Activated CD4-positive, alpha-beta memory T cell treated with anti-CD3 and anti-CD28 coated beads, Interleukin-2, amount 10 ng/mL, durations not matched to agents 7 days and 5 days (primary cell): ENCODE measurements at regions of chr14 and their contacts with region 1.

Region 1: GRCh38 chr14:101707068-101707842 is 54.3 kb upstream of the PPP2R5C start:
- DNase-seq: peak; percentile 68
- H3K4me3 Mint-ChIP-seq: no peak overlapping the region
- H3K27ac Mint-ChIP-seq: peak overlapping the region; percentile 73
- H3K4me1 Mint-ChIP-seq: peaks cover 45% of the 10 kb centered on the region
- H3K27me3 Mint-ChIP-seq: peaks cover 15% of the 10 kb centered on the region

Region 2: GRCh38 chr14:101616202-101616601 is 91.1 kb before region 1 on chr14:
- CTCF ChIA-PET with region 1: no interaction called
- POLR2A ChIA-PET with region 1: no interaction called
- DNase-seq: no peak
- H3K4me3 Mint-ChIP-seq: no peak overlapping the region
- H3K27ac Mint-ChIP-seq: no peak overlapping the region
- H3K4me1 Mint-ChIP-seq: no peaks in the 10 kb centered on the region
- H3K27me3 Mint-ChIP-seq: peaks cover 44% of the 10 kb centered on the region

Region 3: DNA sequence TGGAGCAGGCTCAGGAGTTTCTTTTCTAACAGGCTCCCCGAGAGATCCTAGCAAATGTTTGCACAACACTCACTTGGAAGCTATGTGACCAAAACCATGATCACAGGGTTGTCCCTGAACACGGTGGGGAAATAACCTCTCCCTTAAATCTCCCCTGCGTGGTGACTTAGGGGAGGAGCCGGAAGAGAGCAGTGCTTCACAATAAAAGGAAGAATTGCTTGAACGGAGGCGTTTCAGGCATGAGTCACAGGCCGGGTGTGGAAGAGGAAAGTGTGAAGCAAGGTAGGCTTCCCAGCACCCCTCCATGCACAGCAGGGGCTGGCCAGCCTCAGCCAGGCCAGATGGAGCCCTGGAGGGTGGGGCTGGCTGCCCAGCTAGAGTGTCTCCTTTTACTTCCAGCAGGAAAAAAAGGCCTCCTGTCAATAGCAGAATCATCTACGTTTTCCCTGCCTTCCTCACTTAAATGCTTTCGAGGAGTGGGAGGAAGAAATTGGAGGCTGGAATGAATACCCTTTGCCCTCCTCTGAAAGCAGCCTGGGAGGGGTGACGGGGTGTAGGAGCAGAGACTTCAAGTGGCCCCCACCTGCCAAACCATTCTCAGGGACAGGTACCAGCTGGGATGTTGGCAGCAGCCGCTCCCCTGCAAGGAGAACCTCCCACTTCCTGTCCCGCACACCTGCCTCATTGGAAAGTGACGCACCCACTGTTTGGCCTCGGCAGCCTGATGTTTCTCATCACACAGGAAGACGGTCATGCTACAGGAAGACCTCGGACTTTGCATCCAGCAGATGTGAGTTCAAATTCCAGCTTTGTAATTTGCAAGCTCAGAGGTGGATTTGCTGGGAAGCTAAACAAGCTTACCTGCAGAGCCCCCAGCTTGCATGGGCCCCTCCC is 24.2 kb after region 1 on chr14:
- CTCF ChIA-PET with region 1: interaction called, 13 read pairs
- POLR2A ChIA-PET with region 1: interaction called, 13 read pairs
- DNase-seq: peak; percentile 85
- H3K4me3 Mint-ChIP-seq: peak overlapping the region; percentile 70
- H3K27ac Mint-ChIP-seq: peak overlapping the region; percentile 96
- H3K4me1 Mint-ChIP-seq: peaks cover 48% of the 10 kb centered on the region
- H3K27me3 Mint-ChIP-seq: no peaks in the 10 kb centered on the region

Region 4: DNA sequence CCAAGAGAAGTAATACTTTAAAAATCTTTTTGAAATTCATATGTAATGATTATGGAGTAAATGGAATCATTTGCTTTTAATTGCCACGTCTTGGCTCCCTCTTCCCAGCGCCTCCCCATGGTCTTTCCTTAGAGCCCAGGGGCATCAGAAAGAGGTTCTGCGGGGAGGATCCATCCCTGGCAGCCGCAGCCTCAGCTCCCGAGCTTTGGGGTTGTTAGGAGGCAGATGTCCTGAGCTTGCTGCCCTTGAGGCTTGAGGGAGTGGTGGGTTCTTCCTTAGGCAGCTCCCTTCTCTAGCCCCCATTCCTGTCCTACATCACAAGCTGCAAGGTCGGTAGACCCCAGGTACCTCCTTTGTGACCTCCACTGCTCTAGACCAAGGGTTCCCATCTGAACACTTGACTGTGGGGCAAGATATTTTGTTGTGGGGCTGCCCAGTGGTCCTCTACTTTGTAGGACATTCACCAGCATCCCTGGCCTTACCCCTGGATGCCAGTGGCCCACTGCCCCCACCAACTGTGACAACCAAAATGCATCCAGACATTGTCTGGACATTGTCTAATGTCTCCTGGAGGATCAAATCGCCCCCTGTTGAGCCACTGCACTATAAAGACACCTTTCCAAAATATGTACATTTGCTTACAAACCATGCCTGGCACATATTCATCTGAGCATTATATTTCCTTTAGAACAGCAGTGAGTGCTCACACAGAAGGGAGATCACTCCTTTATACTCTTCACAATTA is 60.5 kb after region 1 on chr14:
- CTCF ChIA-PET with region 1: interaction called, 65 read pairs
- POLR2A ChIA-PET with region 1: interaction called, 22 read pairs
- DNase-seq: no peak
- H3K4me3 Mint-ChIP-seq: no peak overlapping the region
- H3K27ac Mint-ChIP-seq: no peak overlapping the region
- H3K4me1 Mint-ChIP-seq: peaks cover 22% of the 10 kb centered on the region
- H3K27me3 Mint-ChIP-seq: no peaks in the 10 kb centered on the region

Region 5: GRCh38 chr14:101947906-101948665 is 240.8 kb after region 1 on chr14:
- CTCF ChIA-PET with region 1: interaction called, 12 read pairs
- POLR2A ChIA-PET with region 1: interaction called, 23 read pairs
- DNase-seq: peak; percentile 100
- H3K4me3 Mint-ChIP-seq: peak overlapping the region; percentile 89
- H3K27ac Mint-ChIP-seq: peak overlapping the region; percentile 85
- H3K4me1 Mint-ChIP-seq: peaks cover 26% of the 10 kb centered on the region
- H3K27me3 Mint-ChIP-seq: peaks cover 18% of the 10 kb centered on the region

Region 6: GRCh38 chr14:102096214-102097114 is 389.2 kb after region 1 on chr14:
- CTCF ChIA-PET with region 1: interaction called, 24 read pairs
- POLR2A ChIA-PET with region 1: interaction called, 3 read pairs
- DNase-seq: peak; percentile 73
- H3K4me3 Mint-ChIP-seq: no peak overlapping the region
- H3K27ac Mint-ChIP-seq: no peak overlapping the region
- H3K4me1 Mint-ChIP-seq: peaks cover 11% of the 10 kb centered on the region
- H3K27me3 Mint-ChIP-seq: no peaks in the 10 kb centered on the region